ENCODE measurements at regions of chr12 and their contacts with region 1.

Region 1: DNA sequence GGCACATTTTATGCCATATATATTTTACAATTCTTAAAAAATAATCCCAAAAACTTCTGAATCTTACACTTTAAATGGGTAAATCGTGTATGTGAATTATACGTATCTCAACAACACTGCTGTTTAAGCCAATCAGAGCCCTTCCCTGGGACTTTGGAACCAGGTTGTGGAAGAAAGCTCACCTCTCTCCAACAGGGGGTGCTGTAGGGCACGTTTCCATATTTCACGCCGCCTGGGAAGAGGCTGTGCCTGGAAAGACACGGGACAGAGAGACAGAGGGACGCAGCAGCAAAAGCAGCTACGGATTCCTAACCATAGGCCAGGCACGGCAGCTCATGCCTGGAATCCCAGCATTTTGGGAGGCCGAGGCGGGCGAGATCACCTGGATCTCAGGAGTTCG is 29.4 kb upstream of the FBRSL1 start:
- DNase-seq: peak; percentile 67
- H3K4me3 ChIP-seq: no peak overlapping the region
- H3K27ac ChIP-seq: no peak overlapping the region
- H3K4me1 ChIP-seq: peaks cover under 1% of the 10 kb centered on the region
- H3K27me3 ChIP-seq: no peaks in the 10 kb centered on the region
- CTCF ChIP-seq: peak; percentile 68

Region 2: DNA sequence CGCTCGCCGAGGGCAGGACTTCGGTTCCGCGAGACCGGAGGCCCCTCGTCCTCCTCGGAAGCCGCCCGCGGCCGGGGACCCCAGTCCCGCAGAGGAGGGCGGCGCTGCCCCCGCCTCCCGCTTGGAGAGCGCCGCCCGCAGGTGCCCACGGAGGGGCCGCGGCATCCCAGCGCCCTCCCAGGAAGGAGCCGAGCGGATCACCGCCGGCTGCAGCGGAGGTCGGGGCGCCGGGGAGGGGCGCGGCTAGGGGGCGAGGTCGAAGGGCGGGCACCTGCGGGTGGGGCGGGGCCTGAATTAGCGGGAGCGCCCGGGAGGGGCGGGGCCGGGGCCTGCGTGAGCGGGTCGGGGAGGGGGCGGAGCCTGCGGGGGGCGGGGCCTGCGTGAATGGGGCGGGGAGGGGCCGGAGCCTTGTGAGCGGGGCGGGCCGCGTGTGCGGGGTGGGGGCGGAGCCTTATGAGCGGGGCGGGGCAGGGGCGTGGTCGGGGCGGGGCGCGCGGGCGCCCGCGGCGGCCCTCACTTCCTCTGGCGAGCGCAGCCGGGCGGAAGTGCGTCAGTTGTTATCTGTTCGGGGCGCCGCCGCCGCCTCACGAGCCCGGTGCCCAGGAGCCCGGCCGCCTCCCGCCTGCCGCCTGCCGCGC is 29.1 kb after region 1 on chr12 and contains the start of gene FBRSL1:
- CTCF ChIA-PET with region 1: no interaction called
- POLR2A ChIA-PET with region 1: no interaction called
- intact Hi-C with region 1: no loop called
- DNase-seq: peak; percentile 90
- H3K4me3 ChIP-seq: peak within 1 kb of the TSS; percentile 72
- H3K27ac ChIP-seq: peak within 1 kb of the TSS; percentile 65
- H3K4me1 ChIP-seq: peaks cover 17% of the 10 kb centered on the region
- H3K27me3 ChIP-seq: no peaks in the 10 kb centered on the region
- CTCF ChIP-seq: no peak
- total RNA-seq, gene FBRSL1: 111 and 130 TPM in 2 replicates

Region 3: DNA sequence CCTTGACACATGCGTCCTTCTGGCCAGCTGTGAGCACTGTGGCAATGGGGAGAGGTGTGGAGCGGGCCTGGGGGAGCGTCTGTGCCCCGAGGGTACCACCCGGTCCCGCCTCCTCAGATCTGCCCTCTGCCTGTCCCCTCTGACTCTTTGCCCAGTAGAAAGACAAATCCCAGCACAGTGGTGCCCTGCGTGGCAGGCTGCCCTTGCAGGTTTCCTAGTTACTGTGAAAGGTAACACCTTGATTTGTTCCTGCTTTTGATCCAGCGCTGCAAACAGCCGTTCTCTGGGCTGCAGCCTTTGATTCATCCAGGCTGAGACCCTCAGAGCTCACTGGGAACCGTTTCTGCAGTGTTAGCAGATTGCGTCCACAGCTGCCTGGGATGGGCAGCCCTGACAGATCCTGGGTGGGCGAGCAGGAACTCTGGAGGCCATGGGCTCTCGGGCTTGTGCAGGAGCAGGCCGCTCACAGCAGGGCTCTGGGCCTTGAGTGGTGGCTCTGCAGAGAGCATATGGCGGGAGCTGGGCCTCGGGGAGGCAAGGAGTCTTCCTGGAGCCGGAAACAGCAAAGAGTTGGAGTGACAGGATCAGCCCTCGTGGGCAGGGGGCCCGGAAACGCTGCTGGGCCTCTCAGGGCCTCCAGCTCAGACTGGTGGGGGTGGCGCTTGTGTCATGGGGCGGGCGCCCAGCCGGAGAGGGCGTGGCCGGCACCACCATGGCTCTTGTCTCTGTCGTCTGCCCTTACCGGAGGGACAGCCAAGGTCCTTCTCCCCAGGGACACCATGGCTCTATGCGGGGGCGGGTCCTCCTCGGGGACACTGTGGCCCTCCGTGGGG is 46.0 kb after region 1 on chr12:
- CTCF ChIA-PET with region 1: no interaction called
- POLR2A ChIA-PET with region 1: no interaction called
- intact Hi-C with region 1: loop called (anchors 1 kb)
- DNase-seq: peak; percentile 98
- H3K4me3 ChIP-seq: peak overlapping the region; percentile 29
- H3K27ac ChIP-seq: peak overlapping the region; percentile 90
- H3K4me1 ChIP-seq: peaks cover 38% of the 10 kb centered on the region
- H3K27me3 ChIP-seq: no peaks in the 10 kb centered on the region
- CTCF ChIP-seq: no peak

Region 4: GRCh38 chr12:132593521-132594358 is 133.2 kb after region 1 on chr12:
- CTCF ChIA-PET with region 1: no interaction called
- POLR2A ChIA-PET with region 1: no interaction called
- intact Hi-C with region 1: no loop called
- DNase-seq: peak; percentile 97
- H3K4me3 ChIP-seq: peak overlapping the region; percentile 7
- H3K27ac ChIP-seq: no peak overlapping the region
- H3K4me1 ChIP-seq: peaks cover 6% of the 10 kb centered on the region
- H3K27me3 ChIP-seq: no peaks in the 10 kb centered on the region
- CTCF ChIP-seq: no peak

Measured in A673 (cell line).